Thyroid gland (tissue), 4 donors: ENCODE measurements at regions of chr1 and their contacts with region 1.

Region 1: GRCh38 chr1:51990478-51990965 is at the start of gene RAB3B:
- DNase-seq: peak; percentile 55 to 61
- H3K4me3 ChIP-seq: peak within 1 kb of the TSS in 2 of 3 donors; percentile 25 to 30
- H3K27ac ChIP-seq: no peak within 1 kb of the TSS
- H3K4me1 ChIP-seq: no peaks in the 10 kb centered on the region
- H3K27me3 ChIP-seq: peaks cover 18% of the 10 kb centered on the region
- CTCF ChIP-seq: no peak
- POLR2A ChIP-seq: no peak
- total RNA-seq, gene RAB3B: under 0.01 TPM in 1 of 4 donors, not detected in the others

Region 2: DNA sequence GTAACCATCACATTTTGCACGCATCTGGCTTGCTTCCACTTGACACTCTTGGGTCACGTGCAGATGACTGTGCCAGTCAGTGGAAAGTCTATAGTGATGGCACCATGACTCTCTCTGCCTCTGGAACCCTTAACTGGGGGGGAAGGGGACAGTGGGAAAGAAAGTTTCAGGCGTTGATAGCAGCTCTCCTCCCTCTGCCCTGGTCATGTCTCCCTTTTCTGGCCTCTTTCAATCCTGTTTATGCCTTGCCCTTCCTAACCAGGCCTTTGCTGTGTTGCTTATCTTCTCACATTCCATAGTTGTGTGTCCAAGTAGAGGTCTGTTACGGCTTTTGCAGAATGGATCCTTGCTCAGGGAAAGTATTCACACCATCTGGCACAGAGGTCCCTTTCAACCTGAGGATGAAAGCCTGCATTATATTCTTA is 205.5 kb before region 1 on chr1:
- intact Hi-C with region 1: no loop called
- DNase-seq: no peak
- H3K4me3 ChIP-seq: no peak overlapping the region
- H3K27ac ChIP-seq: no peak overlapping the region
- H3K4me1 ChIP-seq: no peaks in the 10 kb centered on the region
- H3K27me3 ChIP-seq: no peaks in the 10 kb centered on the region
- CTCF ChIP-seq: no peak
- POLR2A ChIP-seq: no peak

Region 3: GRCh38 chr1:51897699-51898031 is 92.9 kb before region 1 on chr1:
- intact Hi-C with region 1: loop called (anchors 10 kb)
- DNase-seq: no peak
- H3K4me3 ChIP-seq: no peak overlapping the region
- H3K27ac ChIP-seq: no peak overlapping the region
- H3K4me1 ChIP-seq: no peaks in the 10 kb centered on the region
- H3K27me3 ChIP-seq: no peaks in the 10 kb centered on the region
- CTCF ChIP-seq: no peak
- POLR2A ChIP-seq: no peak